Activated B cell treated with CpG ODN at 0.5 μM for 24 hours (primary cell): ENCODE measurements at regions of chr1 and their contacts with region 1.

Region 1: GRCh38 chr1:101238681-101239094 is 1.9 kb downstream of the S1PR1 start:
- DNase-seq: peak; percentile 78
- ATAC-seq: peak; percentile 28
- H3K4me3 Mint-ChIP-seq: peak overlapping the region; percentile 98
- H3K27ac Mint-ChIP-seq: peak overlapping the region; percentile 98
- H3K4me1 Mint-ChIP-seq: peaks cover 70% of the 10 kb centered on the region
- H3K27me3 Mint-ChIP-seq: no peaks in the 10 kb centered on the region
- CTCF ChIP-seq: peak; percentile 58

Region 2: GRCh38 chr1:100132566-100133477 is 1105.9 kb before region 1 on chr1 and contains the starts of genes SASS6 and TRMT13:
- CTCF ChIA-PET with region 1: no interaction called
- POLR2A ChIA-PET with region 1: no interaction called
- intact Hi-C with region 1: loop called (anchors 2 kb)
- DNase-seq: peak; percentile 81
- ATAC-seq: peak; percentile 99
- H3K4me3 Mint-ChIP-seq: peak within 1 kb of the TSS; percentile 99
- H3K27ac Mint-ChIP-seq: peak within 1 kb of the TSS; percentile 94
- H3K4me1 Mint-ChIP-seq: peaks cover 35% of the 10 kb centered on the region
- H3K27me3 Mint-ChIP-seq: no peaks in the 10 kb centered on the region
- CTCF ChIP-seq: no peak
- total RNA-seq, gene SASS6: 5.5 and 5.9 TPM in 2 replicates
- total RNA-seq, gene TRMT13: 27.2 and 31.4 TPM in 2 replicates

Region 3: GRCh38 chr1:101025657-101026504 is 212.8 kb before region 1 on chr1 and contains the start of gene DPH5:
- CTCF ChIA-PET with region 1: interaction called, 13 read pairs
- POLR2A ChIA-PET with region 1: interaction called, 54 read pairs
- intact Hi-C with region 1: loop called (anchors 1 kb)
- DNase-seq: peak; percentile 77
- ATAC-seq: peak; percentile 95
- H3K4me3 Mint-ChIP-seq: peak within 1 kb of the TSS; percentile 97
- H3K27ac Mint-ChIP-seq: peak within 1 kb of the TSS; percentile 98
- H3K4me1 Mint-ChIP-seq: peaks cover 66% of the 10 kb centered on the region
- H3K27me3 Mint-ChIP-seq: no peaks in the 10 kb centered on the region
- CTCF ChIP-seq: no peak
- total RNA-seq, gene DPH5: 45.2 and 51.9 TPM in 2 replicates

Region 4: DNA sequence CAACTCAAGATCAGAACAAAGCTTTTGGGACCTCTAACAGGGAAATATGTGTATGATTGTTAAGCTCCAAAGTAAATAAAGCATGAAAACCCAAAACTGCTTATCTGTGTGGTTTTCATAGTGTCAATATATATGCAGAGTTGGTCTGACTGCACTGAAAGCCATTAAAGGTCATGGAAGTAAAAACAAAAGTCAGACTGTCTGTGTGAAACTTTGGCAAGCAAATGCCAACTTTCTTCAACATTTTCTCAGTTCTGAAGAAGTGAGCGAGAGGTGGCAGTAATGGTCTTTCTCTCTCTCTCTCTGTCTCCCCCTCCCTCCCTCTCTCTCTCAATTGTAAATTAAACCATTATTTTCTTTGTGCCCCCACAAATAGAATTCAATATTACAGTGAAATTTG is 101.9 kb before region 1 on chr1:
- CTCF ChIA-PET with region 1: interaction called, 96 read pairs
- POLR2A ChIA-PET with region 1: interaction called, 60 read pairs
- intact Hi-C with region 1: loop called (anchors 1 kb)
- DNase-seq: no peak
- ATAC-seq: peak; percentile 80
- H3K4me3 Mint-ChIP-seq: peak overlapping the region; percentile 12
- H3K27ac Mint-ChIP-seq: peak overlapping the region; percentile 10
- H3K4me1 Mint-ChIP-seq: peaks cover 52% of the 10 kb centered on the region
- H3K27me3 Mint-ChIP-seq: no peaks in the 10 kb centered on the region
- CTCF ChIP-seq: no peak

Region 5: DNA sequence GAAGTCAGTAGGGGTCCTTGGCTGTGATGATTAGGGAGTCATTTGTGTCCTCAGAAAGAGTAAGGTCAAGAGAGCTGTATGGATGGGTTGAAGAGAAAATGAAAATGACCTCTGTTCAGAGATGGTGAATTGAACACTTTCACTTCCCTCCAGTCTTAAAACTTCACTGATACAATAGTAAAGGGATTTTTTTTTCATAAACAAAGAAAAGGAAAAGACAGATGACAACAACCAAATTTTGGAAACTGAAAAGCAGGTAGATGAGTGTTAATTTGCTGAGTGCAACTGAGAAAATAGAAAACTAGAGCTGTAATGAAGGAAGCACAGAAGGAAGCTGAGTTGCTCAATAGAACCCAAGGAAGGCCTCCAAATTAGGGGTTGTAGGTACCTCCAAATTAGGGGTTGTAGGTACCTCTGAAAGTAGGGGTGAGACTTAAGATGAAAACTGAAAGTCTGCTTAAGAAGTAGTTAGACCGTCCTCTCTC is 16.7 kb before region 1 on chr1:
- CTCF ChIA-PET with region 1: interaction called, 5 read pairs
- POLR2A ChIA-PET with region 1: interaction called, 18 read pairs
- intact Hi-C with region 1: loop called (anchors 1 kb)
- DNase-seq: no peak
- ATAC-seq: peak; percentile 82
- H3K4me3 Mint-ChIP-seq: peak overlapping the region; percentile 61
- H3K27ac Mint-ChIP-seq: peak overlapping the region; percentile 87
- H3K4me1 Mint-ChIP-seq: peaks cover 20% of the 10 kb centered on the region
- H3K27me3 Mint-ChIP-seq: no peaks in the 10 kb centered on the region
- CTCF ChIP-seq: no peak

Region 6: GRCh38 chr1:101293461-101294051 is 54.9 kb after region 1 on chr1:
- CTCF ChIA-PET with region 1: interaction called, 58 read pairs
- POLR2A ChIA-PET with region 1: interaction called, 30 read pairs
- intact Hi-C with region 1: loop called (anchors 1 kb)
- DNase-seq: no peak
- ATAC-seq: peak; percentile 80
- H3K4me3 Mint-ChIP-seq: peak overlapping the region; percentile 47
- H3K27ac Mint-ChIP-seq: peak overlapping the region; percentile 88
- H3K4me1 Mint-ChIP-seq: peaks cover 60% of the 10 kb centered on the region
- H3K27me3 Mint-ChIP-seq: no peaks in the 10 kb centered on the region
- CTCF ChIP-seq: no peak

Region 7: DNA sequence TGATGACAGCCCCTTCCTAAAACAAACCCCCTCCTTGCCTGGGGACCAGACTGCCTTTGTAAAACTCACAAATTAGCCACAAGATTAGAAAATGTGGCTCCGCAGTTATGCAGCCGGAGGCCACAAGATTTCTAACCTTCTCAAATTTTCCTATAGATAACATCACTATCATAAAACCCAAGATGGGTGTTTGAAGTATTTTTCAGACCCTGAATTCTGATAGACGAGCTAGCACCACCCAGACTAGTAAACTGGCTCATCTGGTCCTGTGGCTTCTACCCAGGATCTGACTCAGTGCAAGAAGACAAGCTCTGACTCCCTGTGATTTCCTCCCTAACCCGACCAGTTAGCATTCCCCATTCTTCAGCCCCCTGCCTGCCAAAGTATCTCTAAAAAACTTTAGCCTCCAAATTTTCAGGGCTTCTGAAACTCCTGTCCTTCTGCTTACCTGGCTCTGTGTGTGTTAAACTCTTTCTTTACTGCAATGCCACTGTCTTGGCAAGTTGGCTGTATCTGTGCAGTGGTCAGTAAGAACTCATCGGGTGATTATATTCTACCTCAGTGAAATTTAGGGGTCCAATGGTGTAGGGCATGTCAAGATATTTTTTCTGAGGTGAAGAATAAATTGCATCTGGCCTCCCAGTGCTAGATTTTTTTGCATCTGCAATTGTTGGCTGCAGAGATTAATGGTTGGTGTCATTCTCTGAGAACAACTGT is 100.2 kb after region 1 on chr1:
- CTCF ChIA-PET with region 1: no interaction called
- POLR2A ChIA-PET with region 1: no interaction called
- intact Hi-C with region 1: no loop called
- DNase-seq: no peak
- ATAC-seq: no peak
- H3K4me3 Mint-ChIP-seq: no peak overlapping the region
- H3K27ac Mint-ChIP-seq: no peak overlapping the region
- H3K4me1 Mint-ChIP-seq: no peaks in the 10 kb centered on the region
- H3K27me3 Mint-ChIP-seq: no peaks in the 10 kb centered on the region
- CTCF ChIP-seq: no peak

Region 8: DNA sequence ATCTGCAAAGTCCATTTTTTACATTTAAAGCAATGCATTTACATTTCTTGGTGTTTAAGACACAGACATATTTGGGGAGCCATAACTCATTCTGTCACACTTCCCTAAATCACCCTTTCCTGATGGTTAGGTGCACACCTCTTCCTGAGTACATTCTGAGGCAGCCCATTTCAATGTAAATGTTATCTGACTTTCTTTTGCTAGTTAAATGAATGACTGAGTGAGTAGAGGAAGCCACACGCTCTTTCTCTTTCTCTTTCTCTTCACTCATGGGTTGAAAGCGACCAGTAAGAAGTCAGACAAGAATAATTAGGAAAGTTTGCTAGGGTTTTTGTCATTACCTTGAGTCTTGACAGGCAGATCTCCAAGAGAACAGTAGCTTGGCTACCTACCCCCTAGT is 141.3 kb after region 1 on chr1:
- CTCF ChIA-PET with region 1: no interaction called
- POLR2A ChIA-PET with region 1: no interaction called
- intact Hi-C with region 1: no loop called
- DNase-seq: no peak
- ATAC-seq: peak; percentile 82
- H3K4me3 Mint-ChIP-seq: peak overlapping the region; percentile 64
- H3K27ac Mint-ChIP-seq: peak overlapping the region; percentile 66
- H3K4me1 Mint-ChIP-seq: peaks cover 31% of the 10 kb centered on the region
- H3K27me3 Mint-ChIP-seq: no peaks in the 10 kb centered on the region
- CTCF ChIP-seq: no peak

Region 9: GRCh38 chr1:101410048-101410878 is 171.6 kb after region 1 on chr1:
- CTCF ChIA-PET with region 1: no interaction called
- POLR2A ChIA-PET with region 1: interaction called, 14 read pairs
- intact Hi-C with region 1: loop called (anchors 5 kb)
- DNase-seq: no peak
- ATAC-seq: peak; percentile 33
- H3K4me3 Mint-ChIP-seq: peak overlapping the region; percentile 64
- H3K27ac Mint-ChIP-seq: peak overlapping the region; percentile 74
- H3K4me1 Mint-ChIP-seq: peaks cover 75% of the 10 kb centered on the region
- H3K27me3 Mint-ChIP-seq: no peaks in the 10 kb centered on the region
- CTCF ChIP-seq: no peak